ENCODE measurements at regions of chr16 and their contacts with region 1.

Region 1: GRCh38 chr16:25224731-25225319 is 8.1 kb downstream of the AQP8 start:
- DNase-seq: no peak
- ATAC-seq: no peak
- H3K4me3 ChIP-seq: no peak overlapping the region
- H3K27ac ChIP-seq: no peak overlapping the region
- H3K4me1 ChIP-seq: peaks cover 0 to 3% (median 0%) of the 10 kb centered on the region in 9 donors
- H3K27me3 ChIP-seq: peaks cover 0 to 4% (median 0%) of the 10 kb centered on the region in 7 donors
- CTCF ChIP-seq: no peak

Region 2: DNA sequence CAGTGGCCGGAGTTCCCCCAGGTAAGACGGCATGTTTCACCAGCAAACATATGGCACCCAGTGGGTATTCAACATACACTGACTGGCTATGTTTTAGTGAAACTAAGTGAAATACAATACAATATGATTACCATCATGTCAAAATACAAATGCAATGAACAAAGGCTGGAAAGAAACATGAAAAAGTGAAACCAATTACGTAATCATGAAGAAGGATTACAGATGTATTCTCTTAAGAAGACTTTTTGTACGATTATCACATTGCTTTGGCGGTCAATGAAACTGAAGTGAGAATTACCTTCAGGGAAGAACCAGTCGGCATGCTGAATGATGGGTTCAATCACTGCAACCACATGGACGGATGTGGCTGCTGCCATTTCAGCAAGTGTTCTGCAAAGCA is 281.4 kb before region 1 on chr16:
- intact Hi-C with region 1: loop called in 1 of 10 experiments (anchors 10 kb)
- DNase-seq: no peak
- ATAC-seq: no peak
- H3K4me3 ChIP-seq: no peak overlapping the region
- H3K27ac ChIP-seq: no peak overlapping the region
- H3K4me1 ChIP-seq: peaks cover 0 to 4% (median 0%) of the 10 kb centered on the region in 9 donors
- H3K27me3 ChIP-seq: no peaks in the 10 kb centered on the region
- CTCF ChIP-seq: no peak

Region 3: DNA sequence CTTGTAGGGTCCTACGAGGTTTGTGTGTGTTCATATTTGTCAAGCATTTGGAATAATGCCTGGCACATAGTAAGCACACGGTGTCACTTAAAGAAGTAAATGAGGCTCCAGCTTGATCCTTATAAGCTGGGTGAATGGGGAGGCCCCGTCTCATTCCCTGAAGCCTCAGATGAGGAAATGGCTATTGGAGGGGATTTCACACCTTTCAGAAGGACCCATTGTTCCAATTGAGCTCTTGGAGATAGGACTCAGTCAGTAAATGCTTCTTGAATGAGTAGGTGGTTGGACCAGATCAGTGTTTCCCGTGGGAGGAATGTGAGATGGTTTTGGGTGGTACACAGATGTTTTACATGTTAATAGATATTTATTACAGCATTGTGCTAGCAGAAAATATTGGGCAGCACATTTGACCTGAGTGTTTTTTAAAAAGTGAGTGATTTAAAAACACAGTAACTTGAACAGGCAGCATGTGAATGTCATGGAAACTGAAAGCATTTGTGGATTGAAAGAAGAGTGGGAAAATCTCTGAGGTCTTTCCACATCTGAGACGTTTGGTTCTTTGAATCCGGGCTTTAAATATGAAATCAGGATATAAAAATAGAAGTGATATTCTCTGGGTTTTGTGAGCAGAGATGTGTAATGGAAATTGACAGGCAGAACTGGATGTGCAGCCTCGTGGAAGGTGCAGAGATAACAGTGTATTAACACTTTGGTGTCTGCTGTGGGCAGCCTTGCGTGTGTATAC is 173.2 kb before region 1 on chr16:
- intact Hi-C with region 1: loop called in 9 of 10 experiments (anchors 1 to 10 kb)
- DNase-seq: no peak
- ATAC-seq: peak in 6 of 8 donors; percentile 35 to 71 (median 60)
- H3K4me3 ChIP-seq: peak overlapping the region in 5 of 10 donors; percentile 5 to 24 (median 20)
- H3K27ac ChIP-seq: peak overlapping the region; percentile 36 to 97 (median 78)
- H3K4me1 ChIP-seq: peaks cover 0 to 54% (median 29%) of the 10 kb centered on the region in 9 donors
- H3K27me3 ChIP-seq: no peaks in the 10 kb centered on the region
- CTCF ChIP-seq: no peak

Region 4: GRCh38 chr16:25066747-25067631 is 157.8 kb before region 1 on chr16:
- intact Hi-C with region 1: loop called in 1 of 10 experiments (anchors 10 kb)
- DNase-seq: peak; percentile 87 to 88
- ATAC-seq: peak; percentile 93 to 99 (median 97)
- H3K4me3 ChIP-seq: peak overlapping the region; percentile 69 to 94 (median 82)
- H3K27ac ChIP-seq: peak overlapping the region; percentile 74 to 97 (median 94)
- H3K4me1 ChIP-seq: peaks cover 0 to 36% (median 27%) of the 10 kb centered on the region in 9 donors
- H3K27me3 ChIP-seq: no peaks in the 10 kb centered on the region
- CTCF ChIP-seq: no peak

Region 5: GRCh38 chr16:25126820-25127232 is 98.0 kb before region 1 on chr16:
- intact Hi-C with region 1: loop called in 4 of 10 experiments (anchors 5 to 10 kb)
- DNase-seq: no peak
- ATAC-seq: peak in 2 of 8 donors; percentile 29 to 37
- H3K4me3 ChIP-seq: no peak overlapping the region
- H3K27ac ChIP-seq: no peak overlapping the region
- H3K4me1 ChIP-seq: peaks cover 0 to 19% (median 0%) of the 10 kb centered on the region in 9 donors
- H3K27me3 ChIP-seq: no peaks in the 10 kb centered on the region
- CTCF ChIP-seq: peak in 7 of 9 donors; percentile 25 to 61 (median 40)

Region 6: GRCh38 chr16:25198021-25198420 is 26.8 kb before region 1 on chr16:
- intact Hi-C with region 1: no loop called
- DNase-seq: no peak
- ATAC-seq: no peak
- H3K4me3 ChIP-seq: no peak overlapping the region
- H3K27ac ChIP-seq: no peak overlapping the region
- H3K4me1 ChIP-seq: no peaks in the 10 kb centered on the region
- H3K27me3 ChIP-seq: no peaks in the 10 kb centered on the region
- CTCF ChIP-seq: no peak

Region 7: GRCh38 chr16:25257504-25257955 is 32.7 kb after region 1 on chr16 and contains the start of gene ZKSCAN2:
- intact Hi-C with region 1: no loop called
- DNase-seq: peak; percentile 90 to 91
- ATAC-seq: peak; percentile 96 to 98 (median 98)
- H3K4me3 ChIP-seq: peak within 1 kb of the TSS; percentile 26 to 93 (median 84)
- H3K27ac ChIP-seq: peak within 1 kb of the TSS; percentile 92 to 100 (median 99)
- H3K4me1 ChIP-seq: peaks cover 4 to 45% (median 36%) of the 10 kb centered on the region in 9 donors
- H3K27me3 ChIP-seq: no peaks in the 10 kb centered on the region
- CTCF ChIP-seq: no peak
- total RNA-seq, gene ZKSCAN2: 4.3 to 8.7 (median 6.0) TPM

Region 8: GRCh38 chr16:25279491-25279890 is 54.7 kb after region 1 on chr16:
- intact Hi-C with region 1: no loop called
- DNase-seq: no peak
- ATAC-seq: no peak
- H3K4me3 ChIP-seq: no peak overlapping the region
- H3K27ac ChIP-seq: no peak overlapping the region
- H3K4me1 ChIP-seq: no peaks in the 10 kb centered on the region
- H3K27me3 ChIP-seq: peaks cover 0 to 5% (median 0%) of the 10 kb centered on the region in 7 donors
- CTCF ChIP-seq: no peak